ENCODE measurements at regions of chr6 and their contacts with region 1.

Region 1: DNA sequence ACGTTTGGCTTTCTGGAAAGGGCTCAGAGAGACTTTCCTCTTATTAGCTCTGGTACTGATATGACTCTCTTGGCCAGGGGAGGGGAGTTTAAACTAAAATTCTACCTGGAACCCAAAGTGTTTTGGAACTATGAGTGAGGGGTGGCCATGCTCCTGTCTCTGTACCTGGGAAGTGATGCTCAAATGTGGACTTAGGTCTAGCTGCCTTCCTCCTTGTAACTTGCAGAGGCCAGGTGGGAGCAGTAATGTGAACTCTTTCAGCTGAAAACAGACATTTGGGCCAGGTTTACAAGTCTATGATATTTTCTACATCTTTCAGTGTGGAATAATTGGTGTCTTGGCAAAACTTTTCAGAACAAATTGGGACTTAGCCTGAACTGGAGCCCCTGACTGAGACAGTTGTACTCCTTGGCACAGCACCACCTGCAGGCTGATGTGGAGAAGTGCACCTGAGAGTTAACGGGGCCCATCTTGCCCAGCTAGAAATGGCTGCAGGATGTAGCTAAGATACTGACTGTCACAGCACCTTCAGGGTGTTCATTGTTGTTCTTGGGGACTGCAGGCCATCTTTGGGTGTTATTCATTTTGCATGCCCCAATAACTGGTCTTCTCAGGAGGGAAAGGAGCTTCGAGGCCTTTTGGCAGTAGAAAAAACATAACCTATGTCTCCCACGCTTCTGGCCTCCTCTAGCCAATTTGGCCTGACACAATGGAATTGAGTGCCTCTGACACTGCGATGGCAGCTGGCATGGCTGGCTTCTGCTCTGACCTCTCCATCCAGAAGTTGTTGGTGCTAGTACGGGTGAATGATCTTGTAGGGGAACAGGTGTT is 37.1 kb downstream of the CD109 start:
- DNase-seq: peak; percentile 87
- H3K4me3 Mint-ChIP-seq: no peak overlapping the region
- H3K27ac Mint-ChIP-seq: no peak overlapping the region
- H3K4me1 Mint-ChIP-seq: peaks cover 14% of the 10 kb centered on the region
- H3K27me3 Mint-ChIP-seq: no peaks in the 10 kb centered on the region

Region 2: DNA sequence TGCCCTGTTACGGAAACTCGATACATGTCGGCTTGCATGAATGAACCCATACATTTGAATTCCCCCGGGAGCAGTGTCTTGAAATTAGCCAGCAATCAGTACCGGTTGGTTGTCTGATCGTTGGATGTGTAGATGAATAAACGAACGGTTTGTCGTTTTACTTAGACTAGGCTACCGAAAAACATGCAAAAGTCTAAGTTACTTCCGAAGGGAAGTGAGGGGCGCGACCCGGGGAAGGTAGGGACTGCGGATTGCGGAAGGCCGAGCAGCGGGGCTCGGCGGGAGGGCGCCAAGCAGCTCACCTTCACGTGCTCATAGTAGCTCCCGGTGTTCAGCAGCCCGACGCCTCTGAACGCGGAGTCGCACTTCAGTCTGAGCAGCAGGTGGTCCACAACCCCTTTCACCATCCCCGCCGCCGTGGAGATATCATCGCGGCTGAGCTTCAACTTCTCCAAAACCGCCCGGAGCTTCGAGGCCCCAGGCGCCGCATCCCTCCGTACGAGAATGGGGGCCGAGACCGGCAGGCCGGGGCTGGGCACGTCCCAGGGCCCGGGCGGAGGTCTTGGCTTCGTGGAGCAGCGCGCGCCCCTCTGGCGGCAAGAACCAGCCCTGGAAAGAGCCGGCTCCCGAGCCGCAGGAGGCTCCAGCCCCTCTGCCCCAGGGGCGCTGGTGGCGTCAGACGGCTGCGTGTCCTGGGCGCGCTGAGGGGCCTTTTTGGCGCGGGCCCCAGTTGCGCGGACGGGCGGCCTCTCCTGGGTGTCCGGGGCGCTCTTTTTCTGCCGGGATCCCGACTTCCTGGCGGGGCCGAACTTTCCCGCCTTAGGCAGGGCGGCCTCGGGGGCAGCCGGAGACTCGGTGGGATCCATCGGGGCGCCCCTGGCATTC is 281.6 kb before region 1 on chr6:
- CTCF ChIA-PET with region 1: no interaction called
- intact Hi-C with region 1: loop called (anchors 2 kb)
- DNase-seq: peak; percentile 60
- H3K4me3 Mint-ChIP-seq: peak overlapping the region; percentile 90
- H3K27ac Mint-ChIP-seq: peak overlapping the region; percentile 86
- H3K4me1 Mint-ChIP-seq: peaks cover 35% of the 10 kb centered on the region
- H3K27me3 Mint-ChIP-seq: no peaks in the 10 kb centered on the region

Region 3: GRCh38 chr6:73580247-73581149 is 152.6 kb before region 1 on chr6:
- CTCF ChIA-PET with region 1: no interaction called
- intact Hi-C with region 1: loop called (anchors 2 kb)
- DNase-seq: peak; percentile 90
- H3K4me3 Mint-ChIP-seq: peak overlapping the region; percentile 76
- H3K27ac Mint-ChIP-seq: peak overlapping the region; percentile 99
- H3K4me1 Mint-ChIP-seq: peaks cover 28% of the 10 kb centered on the region
- H3K27me3 Mint-ChIP-seq: no peaks in the 10 kb centered on the region

Region 4: DNA sequence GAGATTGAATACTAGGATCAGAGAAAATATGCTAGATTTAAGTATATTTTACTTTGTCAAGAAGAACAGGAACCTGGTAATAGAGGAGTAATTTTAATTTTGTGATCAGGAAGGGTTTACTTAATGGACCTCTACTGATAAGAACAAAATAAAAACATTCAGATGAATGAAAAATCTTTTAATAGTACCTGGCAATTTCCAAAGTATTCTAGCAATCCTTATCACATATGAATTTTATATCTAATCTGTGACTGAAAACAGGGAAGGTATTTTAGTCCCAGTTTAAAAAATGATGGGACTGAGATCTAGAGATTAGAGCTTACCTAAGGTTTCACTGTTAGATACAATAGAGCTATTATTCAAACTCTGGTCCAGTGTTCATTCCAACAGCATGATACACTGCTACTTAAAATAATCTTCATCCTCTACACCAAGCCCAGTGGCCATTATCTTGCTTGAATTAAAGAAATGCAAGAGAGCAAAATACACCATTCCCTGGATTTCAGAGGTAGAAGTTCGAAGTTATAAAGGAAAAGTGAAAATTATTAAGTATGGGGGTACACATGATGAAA is 92.8 kb before region 1 on chr6:
- CTCF ChIA-PET with region 1: no interaction called
- intact Hi-C with region 1: no loop called
- DNase-seq: no peak
- H3K4me3 Mint-ChIP-seq: no peak overlapping the region
- H3K27ac Mint-ChIP-seq: no peak overlapping the region
- H3K4me1 Mint-ChIP-seq: peaks cover 5% of the 10 kb centered on the region
- H3K27me3 Mint-ChIP-seq: no peaks in the 10 kb centered on the region

Region 5: DNA sequence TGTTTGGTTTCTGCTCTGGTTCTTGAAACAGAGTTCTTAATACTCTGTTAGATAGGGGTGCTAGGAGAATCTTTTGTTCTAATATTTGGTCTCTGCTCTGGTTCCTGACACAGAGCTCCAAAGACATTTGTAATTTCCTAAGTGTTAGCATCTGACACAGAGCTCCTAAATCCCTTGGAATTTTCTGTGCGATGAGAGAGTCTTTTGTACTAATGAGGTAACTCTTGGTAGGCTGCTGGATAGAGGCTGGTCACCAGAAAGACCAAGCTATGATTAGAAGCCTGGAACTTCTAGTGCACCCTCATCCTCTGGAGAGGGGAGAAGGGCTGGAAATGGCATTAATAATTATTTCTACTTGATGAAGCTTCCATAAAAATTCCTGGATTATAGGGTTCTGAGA is 44.7 kb before region 1 on chr6:
- CTCF ChIA-PET with region 1: interaction called, 10 read pairs
- intact Hi-C with region 1: no loop called
- DNase-seq: no peak
- H3K4me3 Mint-ChIP-seq: no peak overlapping the region
- H3K27ac Mint-ChIP-seq: no peak overlapping the region
- H3K4me1 Mint-ChIP-seq: peaks cover 9% of the 10 kb centered on the region
- H3K27me3 Mint-ChIP-seq: peaks cover 8% of the 10 kb centered on the region

Region 6: DNA sequence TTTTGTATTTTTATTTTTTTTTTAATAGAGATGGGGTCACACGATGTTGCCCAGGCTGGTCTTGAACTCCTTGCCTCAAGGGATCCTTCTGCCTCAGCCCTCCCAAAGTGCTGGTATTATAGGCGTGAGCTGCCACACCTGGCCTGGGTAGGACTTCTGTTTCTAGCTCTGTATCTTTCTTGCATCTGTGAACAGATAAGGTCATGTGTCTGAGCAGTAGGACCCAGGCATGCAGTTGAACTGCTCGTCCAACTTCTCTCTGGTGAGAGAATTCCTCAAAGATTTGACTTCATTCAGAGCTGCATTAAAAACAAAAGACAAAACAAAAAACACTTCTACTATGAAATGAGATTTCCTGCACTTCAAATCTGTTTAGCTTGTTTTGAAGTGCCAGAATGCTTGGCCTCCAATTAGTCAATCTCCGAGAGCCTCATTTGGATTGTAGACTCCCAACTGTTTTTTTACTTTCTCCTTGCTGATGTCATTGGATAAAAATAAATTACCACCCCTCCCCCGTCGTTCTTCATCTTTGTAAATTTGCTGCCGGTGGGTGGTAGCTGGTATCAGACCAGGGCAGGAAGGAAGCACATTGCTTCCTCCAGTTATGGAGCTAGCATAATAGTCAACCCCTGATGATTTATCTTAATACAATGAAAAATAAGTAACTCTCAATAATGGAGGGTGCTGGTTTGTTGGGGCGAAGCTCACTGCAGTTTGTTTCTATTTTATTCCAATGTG is 19.5 kb before region 1 on chr6:
- CTCF ChIA-PET with region 1: interaction called, 12 read pairs
- intact Hi-C with region 1: no loop called
- DNase-seq: no peak
- H3K4me3 Mint-ChIP-seq: no peak overlapping the region
- H3K27ac Mint-ChIP-seq: no peak overlapping the region
- H3K4me1 Mint-ChIP-seq: peaks cover 26% of the 10 kb centered on the region
- H3K27me3 Mint-ChIP-seq: no peaks in the 10 kb centered on the region

Region 7: DNA sequence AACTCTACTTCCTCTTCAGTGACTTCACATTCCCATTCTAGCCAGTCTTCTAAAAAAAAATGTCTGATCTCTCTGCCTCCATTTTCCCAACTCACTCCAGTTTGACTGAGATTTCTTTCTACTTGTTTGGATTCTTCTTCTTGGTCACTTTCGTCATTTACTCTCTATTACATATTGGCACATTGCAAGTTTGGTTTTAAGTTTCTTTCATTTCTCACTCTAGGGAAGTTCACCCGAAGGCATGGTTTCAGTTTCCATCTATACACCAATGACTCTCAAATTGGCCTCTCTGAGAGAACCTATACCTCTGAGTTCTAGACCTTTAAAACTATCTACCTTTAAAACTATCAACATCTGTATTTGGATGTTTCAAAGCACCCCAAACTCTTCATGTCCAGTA is 14.2 kb after region 1 on chr6:
- CTCF ChIA-PET with region 1: interaction called, 30 read pairs
- intact Hi-C with region 1: no loop called
- DNase-seq: no peak
- H3K4me3 Mint-ChIP-seq: no peak overlapping the region
- H3K27ac Mint-ChIP-seq: no peak overlapping the region
- H3K4me1 Mint-ChIP-seq: peaks cover 3% of the 10 kb centered on the region
- H3K27me3 Mint-ChIP-seq: no peaks in the 10 kb centered on the region

Region 8: DNA sequence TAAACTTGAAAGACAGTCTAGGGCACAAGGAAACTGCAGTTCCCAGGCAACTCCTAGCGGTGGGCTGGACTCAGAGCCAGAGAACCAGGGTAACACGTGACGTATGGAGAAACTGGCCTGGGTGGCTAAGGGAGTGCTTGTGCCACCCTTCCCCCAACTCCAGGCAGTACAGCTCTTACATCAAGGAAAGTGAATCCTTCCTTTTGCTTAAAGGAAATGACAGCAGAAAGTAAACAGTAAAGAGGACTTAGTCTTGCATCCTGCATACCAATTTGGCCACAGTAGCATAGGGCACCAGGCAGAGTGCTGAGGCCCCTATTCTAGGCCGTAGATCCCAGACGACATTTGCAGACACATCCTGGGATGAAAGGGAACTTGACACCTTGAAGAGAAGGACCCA is 285.8 kb after region 1 on chr6:
- CTCF ChIA-PET with region 1: no interaction called
- intact Hi-C with region 1: no loop called
- DNase-seq: no peak
- H3K4me3 Mint-ChIP-seq: no peak overlapping the region
- H3K27ac Mint-ChIP-seq: no peak overlapping the region
- H3K4me1 Mint-ChIP-seq: no peaks in the 10 kb centered on the region
- H3K27me3 Mint-ChIP-seq: no peaks in the 10 kb centered on the region

Region 9: DNA sequence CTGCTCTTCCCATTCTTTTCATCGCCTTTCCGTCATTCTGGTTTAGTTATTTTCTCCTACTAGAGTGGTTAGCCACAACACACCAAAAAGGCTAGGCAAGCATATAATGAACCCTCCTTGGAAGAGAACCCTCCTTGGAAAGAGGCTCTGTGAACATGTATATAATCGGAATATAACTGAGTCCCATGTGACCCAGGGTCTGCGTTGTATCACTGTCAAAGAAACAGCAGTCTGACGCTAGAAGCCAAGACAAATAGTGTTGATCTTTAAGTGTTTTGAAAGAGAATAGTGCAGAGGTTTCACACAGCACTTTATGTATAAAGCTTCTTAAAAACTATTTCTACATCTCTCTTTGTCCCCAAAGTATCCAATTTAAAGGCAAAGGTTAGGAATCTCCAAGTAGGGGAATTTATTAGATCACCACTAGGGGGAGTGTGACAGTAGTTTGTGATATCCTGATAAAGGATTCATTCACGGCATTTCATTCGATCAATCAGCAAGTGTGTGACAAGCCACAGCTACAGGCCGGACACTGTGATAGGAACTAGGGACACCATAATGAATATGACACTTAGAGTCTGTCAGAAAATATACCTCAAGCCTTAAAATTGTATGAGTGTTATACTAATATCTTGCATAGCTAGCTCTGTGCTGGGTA is 358.2 kb after region 1 on chr6:
- CTCF ChIA-PET with region 1: no interaction called
- intact Hi-C with region 1: loop called (anchors 10 kb)
- DNase-seq: no peak
- H3K4me3 Mint-ChIP-seq: no peak overlapping the region
- H3K27ac Mint-ChIP-seq: no peak overlapping the region
- H3K4me1 Mint-ChIP-seq: no peaks in the 10 kb centered on the region
- H3K27me3 Mint-ChIP-seq: peaks cover 2% of the 10 kb centered on the region